PC-9 (cell line): ENCODE measurements at regions of chr2 and their contacts with region 1.

Region 1: DNA sequence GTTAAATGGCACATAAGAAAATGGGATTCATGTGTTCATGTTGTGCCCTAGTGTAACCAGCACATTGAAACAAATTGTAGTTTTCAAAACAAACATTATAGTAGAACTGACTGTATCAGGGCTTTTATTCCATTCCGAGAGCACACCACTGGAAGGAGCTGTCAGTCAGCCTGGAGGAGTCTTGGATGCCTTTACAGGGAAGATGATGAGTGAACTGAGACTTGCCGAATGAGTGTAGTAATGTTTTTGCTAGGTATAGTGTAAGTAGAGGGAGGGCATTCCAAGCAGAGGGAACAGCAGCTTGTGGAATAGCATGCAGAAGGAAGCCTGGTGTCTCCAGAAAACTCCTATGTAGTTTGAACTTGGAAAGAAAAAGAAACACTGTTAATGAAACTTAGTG is 183.5 kb downstream of the MCFD2 start:
- DNase-seq: no peak
- H3K4me3 ChIP-seq: no peak overlapping the region
- H3K27ac ChIP-seq: no peak overlapping the region
- H3K4me1 ChIP-seq: peaks cover 4% of the 10 kb centered on the region
- H3K27me3 ChIP-seq: no peaks in the 10 kb centered on the region
- CTCF ChIP-seq: no peak

Region 2: DNA sequence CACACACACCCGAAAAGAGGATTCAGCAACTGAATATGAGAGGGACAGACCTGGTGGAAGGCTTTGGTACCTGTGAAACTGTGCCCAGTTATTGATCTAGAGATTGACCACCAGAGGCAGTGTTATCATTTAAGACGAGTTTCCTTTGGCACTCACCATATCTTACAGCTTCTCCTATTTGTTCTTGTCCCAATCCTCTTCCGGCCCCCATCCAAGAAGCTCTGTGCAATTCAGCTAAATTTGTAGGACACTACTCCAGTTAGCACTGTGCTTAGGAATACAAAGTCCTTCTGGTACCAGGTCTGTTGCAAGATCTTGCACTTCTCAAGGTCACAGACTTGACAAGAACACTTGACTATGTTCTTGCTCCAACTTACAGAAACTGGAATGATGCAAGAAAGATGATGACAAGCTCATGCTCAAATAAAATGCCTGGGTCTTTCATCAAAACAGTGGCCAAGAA is 75.1 kb before region 1 on chr2:
- CTCF ChIA-PET with region 1: interaction called, 12 read pairs
- POLR2A ChIA-PET with region 1: no interaction called
- intact Hi-C with region 1: no loop called
- DNase-seq: peak in 1 of 2 experiments; percentile 8
- H3K4me3 ChIP-seq: no peak overlapping the region
- H3K27ac ChIP-seq: no peak overlapping the region
- H3K4me1 ChIP-seq: no peaks in the 10 kb centered on the region
- H3K27me3 ChIP-seq: no peaks in the 10 kb centered on the region
- CTCF ChIP-seq: peak; percentile 77

Region 3: GRCh38 chr2:46876741-46877384 is 144.7 kb after region 1 on chr2:
- CTCF ChIA-PET with region 1: no interaction called
- POLR2A ChIA-PET with region 1: no interaction called
- intact Hi-C with region 1: no loop called
- DNase-seq: peak; percentile 46 to 75
- H3K4me3 ChIP-seq: no peak overlapping the region
- H3K27ac ChIP-seq: no peak overlapping the region
- H3K4me1 ChIP-seq: peaks cover 17% of the 10 kb centered on the region
- H3K27me3 ChIP-seq: no peaks in the 10 kb centered on the region
- CTCF ChIP-seq: peak; percentile 75

Region 4: DNA sequence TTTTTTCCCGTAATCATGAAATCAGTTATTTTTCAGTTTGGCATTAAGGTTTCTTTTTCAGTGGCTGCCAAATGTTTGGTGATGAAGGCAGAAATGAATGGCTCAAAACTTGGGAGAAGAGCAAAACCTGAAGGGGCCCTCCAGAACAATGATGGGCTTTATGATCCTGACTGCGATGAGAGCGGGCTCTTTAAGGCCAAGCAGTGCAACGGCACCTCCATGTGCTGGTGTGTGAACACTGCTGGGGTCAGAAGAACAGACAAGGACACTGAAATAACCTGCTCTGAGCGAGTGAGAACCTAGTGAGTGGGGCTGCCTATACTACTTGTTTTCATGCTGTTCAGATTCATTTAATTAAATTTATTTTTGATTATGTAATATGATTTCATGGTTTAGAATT is 641.6 kb after region 1 on chr2:
- CTCF ChIA-PET with region 1: no interaction called
- POLR2A ChIA-PET with region 1: no interaction called
- intact Hi-C with region 1: no loop called
- DNase-seq: peak in 1 of 2 experiments; percentile 41
- H3K4me3 ChIP-seq: no peak overlapping the region
- H3K27ac ChIP-seq: no peak overlapping the region
- H3K4me1 ChIP-seq: peaks cover 21% of the 10 kb centered on the region
- H3K27me3 ChIP-seq: no peaks in the 10 kb centered on the region
- CTCF ChIP-seq: 0 out of 2 replicates have a peak, but pooled peaks have one; percentile 21